A673 (cell line): ENCODE measurements at regions of chr5 and their contacts with region 1.

Region 1: DNA sequence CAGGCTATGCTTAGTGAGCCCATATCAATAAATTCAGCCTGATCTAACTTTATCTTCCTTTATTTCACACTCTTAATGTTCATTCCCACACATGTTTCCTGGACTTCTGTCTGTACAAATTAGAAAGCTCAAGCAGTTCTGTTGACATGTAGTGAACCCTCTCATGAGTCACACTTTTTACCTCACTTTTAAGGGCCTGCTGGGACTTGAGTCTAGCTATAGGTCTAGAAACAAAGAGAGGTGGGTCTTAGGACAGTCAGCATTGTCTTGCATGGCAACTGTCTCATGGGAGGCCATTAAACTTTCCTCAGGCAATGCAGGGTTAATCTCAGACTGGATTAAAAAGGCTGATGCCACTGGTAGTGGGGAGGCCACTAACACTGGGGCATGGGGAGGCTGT is 8.6 kb upstream of the CCNH start:
- DNase-seq: no peak
- H3K4me3 ChIP-seq: no peak overlapping the region
- H3K27ac ChIP-seq: no peak overlapping the region
- H3K4me1 ChIP-seq: no peaks in the 10 kb centered on the region
- H3K27me3 ChIP-seq: no peaks in the 10 kb centered on the region
- CTCF ChIP-seq: no peak

Region 2: GRCh38 chr5:88298425-88298824 is 877.1 kb after region 1 on chr5:
- CTCF ChIA-PET with region 1: no interaction called
- POLR2A ChIA-PET with region 1: no interaction called
- intact Hi-C with region 1: no loop called
- DNase-seq: no peak
- H3K4me3 ChIP-seq: no peak overlapping the region
- H3K27ac ChIP-seq: no peak overlapping the region
- H3K4me1 ChIP-seq: no peaks in the 10 kb centered on the region
- H3K27me3 ChIP-seq: no peaks in the 10 kb centered on the region
- CTCF ChIP-seq: no peak

Region 3: GRCh38 chr5:88690409-88691229 is 1269.3 kb after region 1 on chr5:
- CTCF ChIA-PET with region 1: no interaction called
- POLR2A ChIA-PET with region 1: no interaction called
- intact Hi-C with region 1: loop called (anchors 5 kb)
- DNase-seq: peak; percentile 75
- H3K4me3 ChIP-seq: peak overlapping the region; percentile 25
- H3K27ac ChIP-seq: no peak overlapping the region
- H3K4me1 ChIP-seq: peaks cover 3% of the 10 kb centered on the region
- H3K27me3 ChIP-seq: peaks cover 80% of the 10 kb centered on the region
- CTCF ChIP-seq: peak; percentile 97

Region 4: GRCh38 chr5:88724201-88724600 is 1302.9 kb after region 1 on chr5:
- CTCF ChIA-PET with region 1: no interaction called
- POLR2A ChIA-PET with region 1: no interaction called
- intact Hi-C with region 1: loop called (anchors 5 kb)
- DNase-seq: peak; percentile 53
- H3K4me3 ChIP-seq: no peak overlapping the region
- H3K27ac ChIP-seq: no peak overlapping the region
- H3K4me1 ChIP-seq: peaks cover 8% of the 10 kb centered on the region
- H3K27me3 ChIP-seq: no peaks in the 10 kb centered on the region
- CTCF ChIP-seq: peak; percentile 61

Region 5: GRCh38 chr5:89246252-89246651 is 1824.9 kb after region 1 on chr5:
- CTCF ChIA-PET with region 1: no interaction called
- POLR2A ChIA-PET with region 1: no interaction called
- intact Hi-C with region 1: no loop called
- DNase-seq: peak; percentile 46
- H3K4me3 ChIP-seq: no peak overlapping the region
- H3K27ac ChIP-seq: no peak overlapping the region
- H3K4me1 ChIP-seq: peaks cover 4% of the 10 kb centered on the region
- H3K27me3 ChIP-seq: peaks cover 6% of the 10 kb centered on the region
- CTCF ChIP-seq: no peak